H1 (cell line): ENCODE measurements at regions of chr2 and their contacts with region 1.

Region 1: GRCh38 chr2:204108330-204108751 is 171.8 kb downstream of the ICOS start:
- DNase-seq: no peak
- H3K4me3 ChIP-seq: no peak overlapping the region
- H3K27ac ChIP-seq: no peak overlapping the region
- H3K4me1 ChIP-seq: peaks cover 0 to 5% (median 0%) of the 10 kb centered on the region in 4 experiments; a peak in 3 of 7 replicates
- H3K27me3 ChIP-seq: no peaks in the 10 kb centered on the region
- CTCF ChIP-seq: peak; percentile 46 to 59 (median 58)
- EP300 ChIP-seq: no peak
- POLR2A ChIP-seq: no peak
- RAD21 ChIP-seq: peak; percentile 78 to 82

Region 2: GRCh38 chr2:204012072-204012653 is 96.2 kb before region 1 on chr2:
- CTCF ChIA-PET with region 1: no interaction called
- POLR2A ChIA-PET with region 1: no interaction called
- DNase-seq: no peak
- H3K4me3 ChIP-seq: no peak overlapping the region
- H3K27ac ChIP-seq: no peak overlapping the region
- H3K4me1 ChIP-seq: no peaks in the 10 kb centered on the region
- H3K27me3 ChIP-seq: no peaks in the 10 kb centered on the region
- CTCF ChIP-seq: no peak
- EP300 ChIP-seq: no peak
- POLR2A ChIP-seq: no peak
- RAD21 ChIP-seq: no peak

Region 3: GRCh38 chr2:204140246-204140645 is 31.9 kb after region 1 on chr2:
- CTCF ChIA-PET with region 1: interaction called, 14 read pairs
- POLR2A ChIA-PET with region 1: no interaction called
- DNase-seq: no peak
- H3K4me3 ChIP-seq: no peak overlapping the region
- H3K27ac ChIP-seq: no peak overlapping the region
- H3K4me1 ChIP-seq: peaks cover 0 to 4% (median 0%) of the 10 kb centered on the region in 4 experiments; a peak in 1 of 7 replicates
- H3K27me3 ChIP-seq: no peaks in the 10 kb centered on the region
- CTCF ChIP-seq: no peak
- EP300 ChIP-seq: no peak
- POLR2A ChIP-seq: no peak
- RAD21 ChIP-seq: no peak